ENCODE measurements at regions of chr17 and their contacts with region 1.

Region 1: DNA sequence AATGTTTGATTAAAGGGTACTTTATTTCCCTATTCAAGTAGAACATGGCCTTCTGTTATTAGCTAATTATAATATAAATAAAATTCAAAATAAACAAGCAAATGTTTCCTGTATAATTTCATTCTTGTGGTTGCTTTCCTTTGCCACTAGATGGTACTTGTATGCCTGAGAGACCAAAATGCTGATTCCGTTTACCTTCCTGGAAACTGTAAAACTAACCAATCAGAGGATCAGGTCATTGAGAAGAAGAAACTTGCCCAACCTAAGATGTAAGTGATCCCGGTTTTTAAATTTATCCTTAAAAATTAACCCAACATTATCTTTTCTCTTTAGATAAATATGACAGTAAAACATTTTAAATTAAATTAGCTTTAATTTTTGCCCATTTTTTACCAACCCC is 8.1 kb upstream of the ABCA5 start:
- DNase-seq: peak in 1 of 2 experiments; percentile 23
- H3K4me3 ChIP-seq: no peak overlapping the region
- H3K4me3 Mint-ChIP-seq: peak overlapping the region; percentile 46
- H3K27ac Mint-ChIP-seq: no peak overlapping the region
- H3K4me1 ChIP-seq: no peaks in the 10 kb centered on the region
- H3K4me1 Mint-ChIP-seq: peaks cover 6% of the 10 kb centered on the region
- H3K27me3 ChIP-seq: no peaks in the 10 kb centered on the region
- H3K27me3 Mint-ChIP-seq: peaks cover 15% of the 10 kb centered on the region
- CTCF ChIP-seq: peak; percentile 51 to 53

Region 2: GRCh38 chr17:69192754-69193153 is 142.3 kb before region 1 on chr17:
- CTCF ChIA-PET with region 1: no interaction called
- POLR2A ChIA-PET with region 1: no interaction called
- intact Hi-C with region 1: no loop called
- DNase-seq: no peak
- H3K4me3 ChIP-seq: no peak overlapping the region
- H3K4me3 Mint-ChIP-seq: no peak overlapping the region
- H3K27ac Mint-ChIP-seq: no peak overlapping the region
- H3K4me1 ChIP-seq: no peaks in the 10 kb centered on the region
- H3K4me1 Mint-ChIP-seq: no peaks in the 10 kb centered on the region
- H3K27me3 ChIP-seq: no peaks in the 10 kb centered on the region
- H3K27me3 Mint-ChIP-seq: no peaks in the 10 kb centered on the region
- CTCF ChIP-seq: no peak

Region 3: GRCh38 chr17:69314246-69315065 is 20.6 kb before region 1 on chr17:
- CTCF ChIA-PET with region 1: no interaction called
- POLR2A ChIA-PET with region 1: no interaction called
- intact Hi-C with region 1: no loop called
- DNase-seq: no peak
- H3K4me3 ChIP-seq: no peak overlapping the region
- H3K4me3 Mint-ChIP-seq: no peak overlapping the region
- H3K27ac Mint-ChIP-seq: no peak overlapping the region
- H3K4me1 ChIP-seq: no peaks in the 10 kb centered on the region
- H3K4me1 Mint-ChIP-seq: no peaks in the 10 kb centered on the region
- H3K27me3 ChIP-seq: no peaks in the 10 kb centered on the region
- H3K27me3 Mint-ChIP-seq: no peaks in the 10 kb centered on the region
- CTCF ChIP-seq: no peak

Region 4: GRCh38 chr17:69358688-69359596 is 23.9 kb after region 1 on chr17:
- CTCF ChIA-PET with region 1: interaction called, 3 read pairs
- POLR2A ChIA-PET with region 1: no interaction called
- intact Hi-C with region 1: loop called (anchors 1 kb)
- DNase-seq: peak; percentile 38 to 62
- H3K4me3 ChIP-seq: no peak overlapping the region
- H3K4me3 Mint-ChIP-seq: no peak overlapping the region
- H3K27ac Mint-ChIP-seq: no peak overlapping the region
- H3K4me1 ChIP-seq: no peaks in the 10 kb centered on the region
- H3K4me1 Mint-ChIP-seq: no peaks in the 10 kb centered on the region
- H3K27me3 ChIP-seq: no peaks in the 10 kb centered on the region
- H3K27me3 Mint-ChIP-seq: no peaks in the 10 kb centered on the region
- CTCF ChIP-seq: peak; percentile 56 to 82

Region 5: DNA sequence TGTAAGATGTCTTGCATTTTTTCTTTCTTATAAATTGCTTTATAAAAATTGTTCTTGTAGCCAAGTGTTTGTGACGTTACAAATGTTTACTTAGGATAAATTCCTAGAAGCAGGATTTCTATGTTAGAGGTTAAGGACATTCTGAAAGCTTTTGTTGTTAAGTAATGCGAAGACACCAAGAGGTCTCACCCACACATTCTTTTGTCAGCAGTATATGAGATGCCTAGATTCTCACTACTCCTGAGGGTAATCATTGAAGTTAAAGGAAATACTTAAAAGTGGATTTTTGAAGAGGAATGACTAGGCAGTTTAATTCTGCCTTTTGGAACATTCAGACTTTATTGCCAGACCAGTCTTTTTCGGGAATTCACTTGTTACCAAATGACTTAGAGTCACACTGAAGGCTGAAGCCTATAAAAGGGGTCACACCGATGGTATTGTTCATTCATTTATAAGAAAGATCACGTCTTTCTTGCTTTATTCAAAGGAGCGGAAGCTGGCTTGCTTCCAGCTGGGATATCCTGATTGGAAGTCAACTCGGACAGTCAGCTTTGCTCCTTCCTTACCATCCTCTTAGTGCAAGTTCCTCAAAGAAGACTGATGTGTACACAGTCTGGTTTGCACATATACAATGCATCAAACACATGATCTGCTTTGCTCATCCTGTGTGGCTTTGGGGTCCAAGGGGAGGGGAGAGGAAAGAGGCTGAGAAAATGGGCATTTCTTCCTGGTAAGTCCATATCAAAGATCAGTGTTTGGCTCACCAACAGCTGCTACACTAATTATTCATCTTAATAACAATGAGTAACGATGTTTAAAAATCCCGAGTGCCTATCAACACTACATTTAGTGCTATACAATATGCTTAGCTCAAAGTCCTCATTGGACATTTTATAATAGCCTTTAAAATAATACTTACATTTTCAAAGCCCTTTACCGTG is 239.5 kb after region 1 on chr17:
- CTCF ChIA-PET with region 1: no interaction called
- POLR2A ChIA-PET with region 1: no interaction called
- intact Hi-C with region 1: no loop called
- DNase-seq: no peak
- H3K4me3 ChIP-seq: no peak overlapping the region
- H3K4me3 Mint-ChIP-seq: no peak overlapping the region
- H3K27ac Mint-ChIP-seq: no peak overlapping the region
- H3K4me1 ChIP-seq: no peaks in the 10 kb centered on the region
- H3K4me1 Mint-ChIP-seq: no peaks in the 10 kb centered on the region
- H3K27me3 ChIP-seq: no peaks in the 10 kb centered on the region
- H3K27me3 Mint-ChIP-seq: peaks cover 8% of the 10 kb centered on the region
- CTCF ChIP-seq: no peak